ENCODE measurements at regions of chr11 and their contacts with region 1.

Region 1: GRCh38 chr11:72831513-72832300 is 17.5 kb downstream of the ATG16L2 start:
- DNase-seq: peak; percentile 88 to 91
- H3K4me3 ChIP-seq: no peak overlapping the region
- H3K27ac ChIP-seq: peak overlapping the region in 1 of 3 donors; percentile 59
- H3K4me1 ChIP-seq: peaks cover 5 to 36% of the 10 kb centered on the region in 2 donors
- H3K27me3 ChIP-seq: no peaks in the 10 kb centered on the region
- CTCF ChIP-seq: peak; percentile 69 to 98 (median 96)
- POLR2A ChIP-seq: no peak

Region 2: GRCh38 chr11:73177778-73178577 is 346.3 kb after region 1 on chr11:
- intact Hi-C with region 1: loop called (anchors 2 kb)
- DNase-seq: peak; percentile 83 to 87
- H3K4me3 ChIP-seq: no peak overlapping the region
- H3K27ac ChIP-seq: peak overlapping the region in 2 of 3 donors; percentile 20 to 50
- H3K4me1 ChIP-seq: peaks cover 9 to 30% of the 10 kb centered on the region in 2 donors
- H3K27me3 ChIP-seq: no peaks in the 10 kb centered on the region
- CTCF ChIP-seq: peak; percentile 43 to 96 (median 83)
- POLR2A ChIP-seq: no peak

Region 3: GRCh38 chr11:73295231-73295995 is 463.7 kb after region 1 on chr11:
- intact Hi-C with region 1: loop called (anchors 5 kb)
- DNase-seq: peak; percentile 63 to 71
- H3K4me3 ChIP-seq: no peak overlapping the region
- H3K27ac ChIP-seq: no peak overlapping the region
- H3K4me1 ChIP-seq: no peaks in the 10 kb centered on the region
- H3K27me3 ChIP-seq: no peaks in the 10 kb centered on the region
- CTCF ChIP-seq: peak; percentile 70 to 94 (median 81)
- POLR2A ChIP-seq: no peak

Measured in thyroid gland (tissue), 4 donors.